MCF 10A (cell line): ENCODE measurements at regions of chr9 and their contacts with region 1.

Region 1: GRCh38 chr9:11206925-11207324 is 594.1 kb upstream of the PTPRD start:
- DNase-seq: no peak
- H3K4me3 Mint-ChIP-seq: no peak overlapping the region
- H3K27ac Mint-ChIP-seq: no peak overlapping the region
- H3K4me1 Mint-ChIP-seq: no peaks in the 10 kb centered on the region
- H3K27me3 Mint-ChIP-seq: no peaks in the 10 kb centered on the region
- CTCF ChIP-seq: no peak

Region 2: DNA sequence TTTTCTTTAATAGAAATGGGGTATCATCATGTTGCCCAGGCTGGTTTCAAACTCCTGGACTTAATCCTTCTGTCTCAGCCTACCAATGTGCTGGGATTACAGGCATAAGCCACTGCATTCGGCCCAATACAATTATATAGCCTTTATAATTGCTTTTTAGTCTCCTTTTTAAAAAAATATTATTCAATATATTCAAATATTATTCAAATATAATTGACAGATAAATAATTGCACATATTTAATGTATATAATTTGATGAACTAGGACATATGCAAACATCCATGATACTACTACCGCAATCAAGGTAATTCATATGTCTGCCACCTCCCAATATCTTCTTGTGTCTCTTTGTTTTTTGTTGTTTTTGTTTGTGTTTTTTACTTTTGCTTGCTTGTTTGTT is 300.1 kb after region 1 on chr9:
- CTCF ChIA-PET with region 1: no interaction called
- POLR2A ChIA-PET with region 1: no interaction called
- intact Hi-C with region 1: no loop called
- DNase-seq: no peak
- H3K4me3 Mint-ChIP-seq: no peak overlapping the region
- H3K27ac Mint-ChIP-seq: no peak overlapping the region
- H3K4me1 Mint-ChIP-seq: no peaks in the 10 kb centered on the region
- H3K27me3 Mint-ChIP-seq: no peaks in the 10 kb centered on the region
- CTCF ChIP-seq: no peak

Region 3: DNA sequence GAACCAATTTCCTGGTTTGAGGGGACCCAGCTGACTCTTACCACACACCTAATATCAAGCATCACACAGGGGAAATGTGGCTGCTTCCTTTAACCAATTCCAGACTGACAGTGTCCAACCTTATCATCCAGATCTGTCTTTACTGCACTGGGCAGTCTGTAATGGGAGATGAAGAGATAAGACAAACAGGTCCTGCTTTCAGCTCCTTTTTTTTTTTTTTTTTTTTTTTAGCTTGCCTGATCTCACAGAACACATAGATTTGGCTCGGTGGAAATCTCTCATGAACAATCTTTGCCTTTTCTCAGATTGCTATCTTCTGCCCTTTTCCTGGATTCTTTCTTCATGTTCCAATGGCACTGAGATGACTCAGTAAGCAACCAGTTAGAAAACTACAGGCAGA is 1287.5 kb after region 1 on chr9:
- CTCF ChIA-PET with region 1: no interaction called
- POLR2A ChIA-PET with region 1: no interaction called
- intact Hi-C with region 1: loop called (anchors 5 kb)
- DNase-seq: no peak
- H3K4me3 Mint-ChIP-seq: no peak overlapping the region
- H3K27ac Mint-ChIP-seq: no peak overlapping the region
- H3K4me1 Mint-ChIP-seq: no peaks in the 10 kb centered on the region
- H3K27me3 Mint-ChIP-seq: peaks cover 53% of the 10 kb centered on the region
- CTCF ChIP-seq: no peak